Heart right ventricle (tissue), 16 donors: ENCODE measurements at regions of chr7 and their contacts with region 1.

Region 1: GRCh38 chr7:25886387-25887240 is 265.4 kb upstream of the NFE2L3 start:
- DNase-seq: no peak
- ATAC-seq: peak in 3 of 8 donors; percentile 55 to 72 (median 64)
- H3K4me3 ChIP-seq: no peak overlapping the region
- H3K27ac ChIP-seq: no peak overlapping the region
- H3K4me1 ChIP-seq: peaks cover 0 to 5% (median 0%) of the 10 kb centered on the region in 9 donors
- H3K27me3 ChIP-seq: peaks cover 6 to 82% (median 74%) of the 10 kb centered on the region in 7 donors
- CTCF ChIP-seq: no peak

Region 2: DNA sequence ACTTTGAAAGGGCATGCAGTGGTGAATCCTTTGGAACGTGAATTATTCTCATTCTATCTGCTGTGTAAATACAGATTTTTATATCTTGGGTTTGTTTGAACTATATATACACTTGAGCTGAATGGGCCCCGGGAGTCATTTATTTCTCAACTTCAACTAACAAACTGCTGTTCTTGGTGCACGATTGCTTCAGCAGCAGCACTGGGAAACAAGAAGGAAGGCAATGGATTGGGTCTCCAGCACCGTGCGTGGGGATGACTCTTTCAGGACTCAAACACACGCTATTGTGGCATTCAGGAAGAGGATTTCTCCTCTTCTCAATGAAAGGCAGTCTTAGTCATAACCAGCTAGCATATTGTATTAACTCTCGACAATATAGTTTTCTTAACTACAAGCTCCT is 39.4 kb after region 1 on chr7:
- intact Hi-C with region 1: no loop called
- DNase-seq: no peak
- ATAC-seq: no peak
- H3K4me3 ChIP-seq: no peak overlapping the region
- H3K27ac ChIP-seq: no peak overlapping the region
- H3K4me1 ChIP-seq: no peaks in the 10 kb centered on the region
- H3K27me3 ChIP-seq: peaks cover 0 to 35% (median 11%) of the 10 kb centered on the region in 7 donors
- CTCF ChIP-seq: no peak

Region 3: DNA sequence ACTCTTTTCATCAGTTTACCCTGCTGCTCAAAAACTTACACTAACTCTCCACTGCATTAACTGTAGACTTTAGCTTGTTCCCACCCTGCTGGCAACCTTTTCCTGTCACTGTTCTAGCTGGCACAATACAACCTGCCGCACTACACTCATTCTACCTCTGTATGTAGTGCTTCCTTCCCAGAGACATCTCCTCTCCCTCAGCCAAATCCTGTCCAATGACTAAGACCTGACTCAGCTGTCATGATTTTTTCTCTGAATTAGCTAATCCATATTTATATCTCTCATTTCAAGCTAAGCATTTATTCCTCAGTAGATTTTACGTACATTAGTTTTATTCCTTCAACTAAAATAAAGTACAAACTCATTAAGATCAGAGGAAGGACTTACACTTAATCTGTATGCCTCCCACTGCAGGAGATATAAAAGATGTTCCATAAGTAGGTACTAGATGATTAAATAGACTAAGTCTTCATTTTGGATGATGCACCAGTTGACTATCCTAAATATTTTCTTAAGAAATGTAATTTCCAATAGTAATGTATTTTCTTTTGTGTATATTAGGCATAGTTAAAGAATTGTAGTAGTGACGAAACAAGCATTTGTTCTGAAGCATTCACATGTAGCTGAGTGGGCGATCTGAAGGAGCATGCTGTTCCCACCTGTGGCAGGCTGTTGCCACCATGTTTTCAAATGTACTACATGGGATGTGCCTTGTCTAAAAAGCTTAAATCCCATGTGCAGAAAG is 788.7 kb after region 1 on chr7:
- intact Hi-C with region 1: loop called in 3 of 10 experiments (anchors 5 to 10 kb)
- DNase-seq: no peak
- ATAC-seq: no peak
- H3K4me3 ChIP-seq: no peak overlapping the region
- H3K27ac ChIP-seq: no peak overlapping the region
- H3K4me1 ChIP-seq: no peaks in the 10 kb centered on the region
- H3K27me3 ChIP-seq: peaks cover 0 to 49% (median 18%) of the 10 kb centered on the region in 7 donors
- CTCF ChIP-seq: no peak